Left ventricle myocardium inferior (tissue), 1 donor: ENCODE measurements at regions of chr15 and their contacts with region 1.

Region 1: DNA sequence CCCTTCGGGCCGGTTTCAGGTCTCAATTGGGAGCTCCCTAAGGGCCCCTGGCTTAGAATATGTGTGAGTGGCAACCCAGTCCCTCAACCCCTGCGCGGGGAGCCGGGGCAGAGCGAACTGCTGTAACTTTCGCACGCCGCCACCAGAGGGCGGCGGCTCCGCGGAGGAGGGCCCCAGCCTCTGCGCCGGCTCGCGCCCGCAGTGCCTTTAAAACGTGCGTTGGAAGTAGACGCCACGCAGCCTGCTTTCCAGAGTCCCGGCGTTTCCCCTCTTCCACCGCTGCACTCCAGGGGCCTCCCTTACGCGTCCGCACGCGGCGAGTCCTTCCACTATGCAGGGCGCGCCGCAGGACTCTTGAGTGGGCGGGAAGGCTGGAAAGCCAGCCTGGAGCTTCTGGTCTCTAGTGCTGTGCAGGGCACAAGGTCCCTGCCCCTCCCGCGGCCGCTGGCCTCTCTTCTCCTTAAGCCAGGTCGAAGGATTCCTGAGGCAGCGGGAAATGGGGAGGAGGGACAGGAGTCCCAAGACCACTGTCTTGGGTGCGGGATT is 23.7 kb upstream of the RNU6-1 start:
- DNase-seq: peak; percentile 79
- H3K4me3 ChIP-seq: peak overlapping the region; percentile 65
- H3K27ac ChIP-seq: peak overlapping the region; percentile 68
- H3K4me1 ChIP-seq: peaks cover 11% of the 10 kb centered on the region
- H3K27me3 ChIP-seq: no peaks in the 10 kb centered on the region
- CTCF ChIP-seq: peak; percentile 97

Region 2: GRCh38 chr15:67998599-67999122 is 135.1 kb after region 1 on chr15:
- intact Hi-C with region 1: no loop called
- DNase-seq: no peak
- H3K4me3 ChIP-seq: no peak overlapping the region
- H3K27ac ChIP-seq: no peak overlapping the region
- H3K4me1 ChIP-seq: peaks cover 6% of the 10 kb centered on the region
- H3K27me3 ChIP-seq: no peaks in the 10 kb centered on the region
- CTCF ChIP-seq: no peak

Region 3: GRCh38 chr15:68154923-68155559 is 291.5 kb after region 1 on chr15:
- intact Hi-C with region 1: loop called (anchors 2 kb)
- DNase-seq: no peak
- H3K4me3 ChIP-seq: no peak overlapping the region
- H3K27ac ChIP-seq: peak overlapping the region; percentile 25
- H3K4me1 ChIP-seq: peaks cover 19% of the 10 kb centered on the region
- H3K27me3 ChIP-seq: no peaks in the 10 kb centered on the region
- CTCF ChIP-seq: peak; percentile 85